ENCODE measurements at regions of chr4 and their contacts with region 1.

Region 1: GRCh38 chr4:39181905-39182638 is at the start of gene WDR19:
- DNase-seq: peak; percentile 100
- H3K4me3 ChIP-seq: peak within 1 kb of the TSS; percentile 51 to 85 (median 78)
- H3K27ac ChIP-seq: no peak within 1 kb of the TSS
- H3K4me1 ChIP-seq: peaks cover 9% of the 10 kb centered on the region
- H3K27me3 ChIP-seq: no peaks in the 10 kb centered on the region
- CTCF ChIP-seq: peak; percentile 35 to 59
- POLR2A ChIP-seq: peak; percentile 51
- total RNA-seq, gene WDR19: 28.2 and 32.7 TPM in 2 replicates

Region 2: GRCh38 chr4:38872604-38873006 is 309.5 kb before region 1 on chr4:
- CTCF ChIA-PET with region 1: no interaction called
- POLR2A ChIA-PET with region 1: no interaction called
- dilution Hi-C with region 1: no loop called
- intact Hi-C with region 1: no loop called
- DNase-seq: no peak
- H3K4me3 ChIP-seq: no peak overlapping the region
- H3K27ac ChIP-seq: no peak overlapping the region
- H3K4me1 ChIP-seq: peaks cover 19% of the 10 kb centered on the region
- H3K27me3 ChIP-seq: no peaks in the 10 kb centered on the region
- CTCF ChIP-seq: no peak
- POLR2A ChIP-seq: no peak

Region 3: GRCh38 chr4:38902695-38903094 is 279.4 kb before region 1 on chr4:
- CTCF ChIA-PET with region 1: interaction called, 11 read pairs
- POLR2A ChIA-PET with region 1: no interaction called
- dilution Hi-C with region 1: no loop called
- intact Hi-C with region 1: no loop called
- DNase-seq: peak; percentile 35
- H3K4me3 ChIP-seq: no peak overlapping the region
- H3K27ac ChIP-seq: no peak overlapping the region
- H3K4me1 ChIP-seq: no peaks in the 10 kb centered on the region
- H3K27me3 ChIP-seq: no peaks in the 10 kb centered on the region
- CTCF ChIP-seq: no peak
- POLR2A ChIP-seq: no peak

Region 4: DNA sequence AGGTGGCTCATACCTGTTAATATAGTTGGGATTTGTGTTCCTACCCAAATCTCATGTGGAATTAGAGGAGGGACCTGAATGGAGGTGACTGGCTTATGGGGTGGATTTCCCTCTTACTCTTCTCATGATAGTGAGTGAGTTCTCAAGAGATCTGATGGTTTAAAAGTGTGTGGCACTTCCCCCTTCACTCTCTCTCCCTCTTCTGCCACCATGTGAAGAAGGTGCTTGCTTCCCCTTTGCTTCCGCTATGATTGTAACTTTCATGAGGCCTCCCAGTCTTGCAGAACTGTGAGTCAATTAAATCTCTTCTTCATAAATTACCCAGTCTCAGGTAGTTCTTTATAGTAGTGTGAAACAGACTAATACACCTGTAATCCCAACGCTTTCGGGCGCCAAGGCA is 28.1 kb before region 1 on chr4:
- CTCF ChIA-PET with region 1: no interaction called
- POLR2A ChIA-PET with region 1: no interaction called
- dilution Hi-C with region 1: no loop called
- intact Hi-C with region 1: no loop called
- DNase-seq: no peak
- H3K4me3 ChIP-seq: no peak overlapping the region
- H3K27ac ChIP-seq: no peak overlapping the region
- H3K4me1 ChIP-seq: no peaks in the 10 kb centered on the region
- H3K27me3 ChIP-seq: no peaks in the 10 kb centered on the region
- CTCF ChIP-seq: no peak
- POLR2A ChIP-seq: no peak

Region 5: DNA sequence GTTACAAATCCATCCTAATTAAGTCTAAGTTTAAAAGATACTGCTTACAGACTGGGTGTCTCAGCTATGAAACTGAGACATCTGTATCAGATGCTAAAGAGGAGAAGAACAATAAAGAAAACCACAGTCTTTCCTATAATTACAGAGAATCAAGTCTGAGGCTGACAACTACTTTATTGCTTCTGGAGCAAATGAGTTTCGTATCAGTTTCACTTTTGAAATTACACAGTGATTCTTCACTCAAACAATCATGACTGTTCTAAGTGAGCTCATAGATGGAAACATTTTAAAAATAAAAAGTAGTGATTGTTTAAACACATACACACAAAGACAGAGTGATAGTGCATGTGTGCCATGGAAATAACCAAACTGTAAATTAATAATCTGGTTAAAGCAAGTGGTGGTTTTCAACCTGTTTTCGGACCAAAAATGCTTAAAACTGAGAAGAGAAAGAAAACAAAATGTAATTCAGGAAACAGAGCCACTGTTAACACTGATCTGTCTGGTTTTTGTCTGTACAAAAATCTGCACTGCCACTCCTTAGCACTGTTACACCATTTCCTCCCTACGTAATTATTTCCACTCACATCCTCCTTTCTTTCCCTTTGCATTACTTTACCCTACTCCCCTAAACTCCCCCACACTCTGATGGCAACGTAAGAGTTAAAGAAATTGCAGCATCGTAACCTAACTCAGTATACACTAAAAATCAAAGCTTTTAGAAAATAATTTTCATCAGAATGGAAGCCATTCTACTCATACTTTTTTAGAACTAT is 171.6 kb after region 1 on chr4:
- CTCF ChIA-PET with region 1: no interaction called
- POLR2A ChIA-PET with region 1: no interaction called
- dilution Hi-C with region 1: no loop called
- intact Hi-C with region 1: loop called (anchors 2 kb)
- DNase-seq: peak; percentile 83
- H3K4me3 ChIP-seq: peak overlapping the region; percentile 19 to 73 (median 27)
- H3K27ac ChIP-seq: peak overlapping the region; percentile 92
- H3K4me1 ChIP-seq: peaks cover 11% of the 10 kb centered on the region
- H3K27me3 ChIP-seq: no peaks in the 10 kb centered on the region
- CTCF ChIP-seq: no peak
- POLR2A ChIP-seq: peak; percentile 76

Region 6: DNA sequence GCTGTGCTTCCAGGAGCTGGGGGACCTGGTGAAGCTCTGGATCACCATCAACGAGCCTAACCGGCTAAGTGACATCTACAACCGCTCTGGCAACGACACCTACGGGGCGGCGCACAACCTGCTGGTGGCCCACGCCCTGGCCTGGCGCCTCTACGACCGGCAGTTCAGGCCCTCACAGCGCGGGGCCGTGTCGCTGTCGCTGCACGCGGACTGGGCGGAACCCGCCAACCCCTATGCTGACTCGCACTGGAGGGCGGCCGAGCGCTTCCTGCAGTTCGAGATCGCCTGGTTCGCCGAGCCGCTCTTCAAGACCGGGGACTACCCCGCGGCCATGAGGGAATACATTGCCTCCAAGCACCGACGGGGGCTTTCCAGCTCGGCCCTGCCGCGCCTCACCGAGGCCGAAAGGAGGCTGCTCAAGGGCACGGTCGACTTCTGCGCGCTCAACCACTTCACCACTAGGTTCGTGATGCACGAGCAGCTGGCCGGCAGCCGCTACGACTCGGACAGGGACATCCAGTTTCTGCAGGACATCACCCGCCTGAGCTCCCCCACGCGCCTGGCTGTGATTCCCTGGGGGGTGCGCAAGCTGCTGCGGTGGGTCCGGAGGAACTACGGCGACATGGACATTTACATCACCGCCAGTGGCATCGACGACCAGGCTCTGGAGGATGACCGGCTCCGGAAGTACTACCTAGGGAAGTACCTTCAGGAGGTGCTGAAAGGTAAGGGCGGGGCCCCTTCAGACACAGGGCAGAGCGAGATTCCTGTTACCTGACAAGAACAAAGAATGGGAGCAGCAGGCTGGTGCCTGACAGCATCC is 264.9 kb after region 1 on chr4:
- CTCF ChIA-PET with region 1: interaction called, 3 read pairs
- POLR2A ChIA-PET with region 1: no interaction called
- dilution Hi-C with region 1: no loop called
- intact Hi-C with region 1: loop called (anchors 2 kb)
- DNase-seq: peak; percentile 69
- H3K4me3 ChIP-seq: peak overlapping the region in 2 of 3 experiments; percentile 26 to 33
- H3K27ac ChIP-seq: no peak overlapping the region
- H3K4me1 ChIP-seq: peaks cover 7% of the 10 kb centered on the region
- H3K27me3 ChIP-seq: no peaks in the 10 kb centered on the region
- CTCF ChIP-seq: peak; percentile 48 to 62
- POLR2A ChIP-seq: no peak

Region 7: GRCh38 chr4:39458505-39459300 is 276.6 kb after region 1 on chr4 and contains the starts of genes LIAS and RPL9:
- CTCF ChIA-PET with region 1: no interaction called
- POLR2A ChIA-PET with region 1: no interaction called
- dilution Hi-C with region 1: no loop called
- intact Hi-C with region 1: loop called (anchors 1 kb)
- DNase-seq: peak; percentile 99
- H3K4me3 ChIP-seq: peak within 1 kb of the TSS; percentile 55 to 99 (median 93)
- H3K27ac ChIP-seq: peak within 1 kb of the TSS; percentile 83
- H3K4me1 ChIP-seq: peaks cover 26% of the 10 kb centered on the region
- H3K27me3 ChIP-seq: no peaks in the 10 kb centered on the region
- CTCF ChIP-seq: no peak
- POLR2A ChIP-seq: peak; percentile 98
- total RNA-seq, gene LIAS: 9.7 and 11.3 TPM in 2 replicates
- total RNA-seq, gene RPL9: 963 and 988 TPM in 2 replicates

Measured in endothelial cell of umbilical vein (primary cell).